RWPE1 (cell line): ENCODE measurements at regions of chrX and their contacts with region 1.

Region 1: DNA sequence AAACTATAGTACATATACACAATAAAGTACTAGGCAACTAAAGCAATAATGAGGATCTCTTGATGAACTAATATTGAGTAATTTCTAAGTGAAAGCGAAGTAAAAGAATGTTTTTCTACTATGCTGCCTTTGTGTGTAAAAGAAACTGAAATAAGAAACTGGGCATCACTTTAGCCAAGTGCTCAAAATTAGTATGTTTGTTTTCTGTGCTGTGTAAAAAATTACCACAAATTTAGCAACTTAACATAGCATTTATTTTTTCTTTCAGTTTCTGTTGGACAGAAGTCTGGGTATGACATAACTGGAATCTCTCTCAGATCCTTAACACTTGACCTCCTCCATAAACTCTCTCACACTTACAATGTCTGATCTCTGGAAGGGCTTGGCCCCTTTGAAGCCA is 687.1 kb upstream of the MAGEB2 start:
- DNase-seq: no peak
- H3K27ac ChIP-seq: no peak overlapping the region
- CTCF ChIP-seq: no peak

Region 2: GRCh38 chrX:29555465-29556091 is 27.3 kb after region 1 on chrX:
- CTCF ChIA-PET with region 1: no interaction called
- POLR2A ChIA-PET with region 1: no interaction called
- DNase-seq: peak; percentile 5
- H3K27ac ChIP-seq: no peak overlapping the region
- CTCF ChIP-seq: no peak

Region 3: DNA sequence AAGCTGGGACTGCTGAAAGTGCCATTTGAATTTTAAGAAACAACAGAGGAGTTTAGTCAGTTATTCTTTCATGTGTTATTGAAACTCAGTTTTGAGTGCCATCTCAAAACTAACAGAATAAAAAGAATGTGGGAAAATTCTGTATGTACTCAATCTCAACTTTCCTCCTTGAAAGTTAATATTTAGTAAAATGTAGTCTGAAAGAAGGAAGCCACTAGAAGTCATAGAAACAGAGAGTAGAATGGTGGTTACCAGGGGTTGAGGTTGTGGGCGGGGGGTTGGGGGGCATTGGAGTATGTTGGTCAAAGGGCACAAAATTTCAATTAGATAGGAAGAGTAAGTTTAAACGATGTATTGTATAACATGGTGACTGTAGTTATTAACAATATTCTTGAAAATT is 58.8 kb after region 1 on chrX:
- CTCF ChIA-PET with region 1: no interaction called
- POLR2A ChIA-PET with region 1: interaction called, 11 read pairs
- DNase-seq: no peak
- H3K27ac ChIP-seq: no peak overlapping the region
- CTCF ChIP-seq: no peak